ENCODE measurements at regions of chr9 and their contacts with region 1.

Region 1: GRCh38 chr9:115013998-115014397 is 83.6 kb upstream of the TNFSF8 start:
- DNase-seq: peak; percentile 58 to 85 (median 71)
- H3K4me3 ChIP-seq: no peak overlapping the region
- H3K4me3 Mint-ChIP-seq: no peak overlapping the region
- H3K27ac ChIP-seq: no peak overlapping the region
- H3K27ac Mint-ChIP-seq: peak overlapping the region in 1 of 8 donors; percentile 13
- H3K4me1 ChIP-seq: no peaks in the 10 kb centered on the region
- H3K4me1 Mint-ChIP-seq: peaks cover 1 to 23% (median 8%) of the 10 kb centered on the region in 3 donors
- H3K27me3 ChIP-seq: no peaks in the 10 kb centered on the region
- H3K27me3 Mint-ChIP-seq: peaks cover 0 to 8% of the 10 kb centered on the region in 2 donors

Region 2: DNA sequence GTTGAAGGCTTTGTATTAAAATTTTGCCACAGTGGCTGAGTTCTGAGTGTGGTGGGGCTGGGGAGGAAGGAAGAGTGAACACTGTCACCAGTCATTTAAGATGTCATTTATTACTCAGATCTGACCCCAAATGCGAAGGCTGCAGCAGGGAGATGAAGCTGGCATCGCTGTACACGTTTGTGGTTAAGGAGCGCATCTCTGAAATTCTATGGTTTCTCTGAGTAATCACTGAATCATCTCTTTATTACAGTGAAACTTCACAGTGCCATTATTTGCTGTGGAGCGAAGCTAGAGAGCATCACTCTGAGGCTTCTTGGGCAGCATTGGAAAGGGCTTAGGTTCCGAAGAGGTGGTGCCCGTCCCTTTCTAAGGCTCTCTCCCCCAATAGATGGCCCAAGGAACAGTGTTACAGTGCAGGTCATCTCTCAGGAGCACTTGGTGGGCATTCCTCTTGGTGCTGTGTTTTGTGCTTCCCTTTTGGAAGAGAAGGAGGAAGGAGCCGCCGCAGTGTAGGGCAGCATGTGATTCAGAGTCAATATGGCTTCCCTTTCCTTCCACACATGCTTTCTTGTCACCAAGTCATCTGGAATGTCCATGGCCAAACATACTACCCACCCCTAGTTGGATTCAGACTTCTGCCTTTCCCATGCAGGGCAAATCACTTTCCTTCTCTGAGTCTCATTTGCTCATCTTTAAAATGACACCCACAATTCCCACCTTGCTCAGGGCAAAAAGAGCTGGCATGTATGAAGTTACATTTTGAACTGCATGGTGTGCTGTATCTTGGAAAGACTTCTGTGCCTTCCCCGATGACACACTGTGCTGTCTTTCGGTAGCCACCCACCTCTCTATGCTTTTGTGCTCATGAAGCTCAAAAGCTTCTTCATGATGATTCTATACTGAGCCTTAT is 322.7 kb before region 1 on chr9:
- CTCF ChIA-PET with region 1: interaction called, 11 read pairs
- POLR2A ChIA-PET with region 1: no interaction called
- DNase-seq: peak; percentile 12 to 84 (median 37)
- H3K4me3 ChIP-seq: peak overlapping the region; percentile 18
- H3K4me3 Mint-ChIP-seq: peak overlapping the region; percentile 2 to 82 (median 63)
- H3K27ac ChIP-seq: no peak overlapping the region
- H3K27ac Mint-ChIP-seq: peak overlapping the region; percentile 65 to 97 (median 86)
- H3K4me1 ChIP-seq: peaks cover 16% of the 10 kb centered on the region
- H3K4me1 Mint-ChIP-seq: peaks cover 33 to 54% (median 46%) of the 10 kb centered on the region in 3 donors
- H3K27me3 ChIP-seq: no peaks in the 10 kb centered on the region
- H3K27me3 Mint-ChIP-seq: peaks cover 0 to 3% of the 10 kb centered on the region in 2 donors

Region 3: DNA sequence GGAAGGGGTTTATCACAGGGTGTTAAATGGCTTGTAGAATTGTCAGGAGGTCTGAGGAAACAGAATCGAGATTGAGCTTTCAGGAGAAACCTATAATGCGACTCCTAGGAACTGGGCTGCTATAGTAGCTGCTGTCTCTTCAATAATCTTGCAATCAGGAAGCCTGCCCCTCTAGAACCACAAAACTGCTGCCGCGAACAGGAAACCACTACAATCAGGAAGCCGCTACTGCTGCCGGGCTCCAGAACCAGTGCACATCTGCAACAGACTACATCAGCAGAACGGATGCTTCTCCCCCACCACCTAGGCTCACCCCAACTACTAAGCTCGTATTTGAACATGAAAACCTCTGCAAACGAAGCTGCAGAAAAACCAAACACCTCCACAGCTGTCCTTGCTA is 115.3 kb before region 1 on chr9:
- CTCF ChIA-PET with region 1: interaction called, 10 read pairs
- POLR2A ChIA-PET with region 1: no interaction called
- DNase-seq: peak; percentile 54 to 89 (median 88)
- H3K4me3 ChIP-seq: peak overlapping the region; percentile 30
- H3K4me3 Mint-ChIP-seq: no peak overlapping the region
- H3K27ac ChIP-seq: no peak overlapping the region
- H3K27ac Mint-ChIP-seq: no peak overlapping the region
- H3K4me1 ChIP-seq: peaks cover 99% of the 10 kb centered on the region
- H3K4me1 Mint-ChIP-seq: peaks cover 0 to 25% (median 0%) of the 10 kb centered on the region in 3 donors
- H3K27me3 ChIP-seq: no peaks in the 10 kb centered on the region
- H3K27me3 Mint-ChIP-seq: no peaks in the 10 kb centered on the region

Measured in CD8-positive, alpha-beta memory T cell (primary cell).